Dendritic cell treated with granulocyte-macrophage colony-stimulating factor and Interleukin-4, amounts not matched to agents 40 ng/mL and 50 ng/mL, for 4 days (primary cell): ENCODE measurements at regions of chr4 and their contacts with region 1.

Region 1: GRCh38 chr4:38160487-38161207 is 200.4 kb downstream of the PTTG2 start:
- H3K4me3 Mint-ChIP-seq: no peak overlapping the region
- H3K27ac Mint-ChIP-seq: peak overlapping the region; percentile 90
- H3K4me1 Mint-ChIP-seq: peaks cover 76% of the 10 kb centered on the region
- H3K27me3 Mint-ChIP-seq: no peaks in the 10 kb centered on the region

Region 2: DNA sequence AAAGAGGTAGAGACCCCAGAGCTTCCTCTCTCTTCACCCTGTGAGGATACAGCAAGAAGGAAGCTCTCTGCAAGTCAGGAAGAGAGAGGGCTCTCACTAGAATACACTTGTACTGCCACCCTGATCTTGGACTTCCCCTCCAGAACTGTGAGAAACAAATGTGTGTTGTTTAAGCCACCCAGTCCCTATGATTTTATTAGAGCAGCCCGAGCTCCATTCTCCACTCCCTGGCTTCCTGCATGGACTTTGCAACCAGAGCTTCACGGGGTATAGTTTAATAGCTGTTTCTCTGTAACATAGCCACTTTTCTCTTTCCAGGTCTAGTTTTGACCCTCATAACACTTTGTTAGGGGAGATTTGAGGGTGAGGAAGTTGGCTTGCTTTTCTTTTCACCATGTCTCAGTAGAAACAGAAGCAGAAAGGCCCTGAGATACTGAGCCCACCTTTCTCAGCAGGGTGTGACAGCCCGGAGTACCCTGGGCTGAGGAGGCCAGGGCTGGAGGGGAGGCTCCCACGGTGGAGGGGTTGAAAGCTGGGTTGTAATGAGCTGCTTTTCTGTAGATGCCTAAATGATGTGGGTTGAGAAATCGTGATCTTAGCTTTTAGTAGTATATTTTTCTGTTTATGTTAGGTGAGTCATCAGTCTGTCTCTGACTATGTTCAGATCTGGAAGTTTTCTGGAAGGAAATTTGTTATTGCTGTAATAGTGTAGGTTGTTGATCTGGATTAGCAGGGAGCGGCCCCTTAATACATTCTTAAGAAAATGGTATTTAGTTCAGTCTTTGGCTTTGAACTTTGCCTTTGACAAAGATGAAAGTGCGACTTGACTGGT is 81.8 kb before region 1 on chr4:
- intact Hi-C with region 1: loop called (anchors 5 kb)
- H3K4me3 Mint-ChIP-seq: peak overlapping the region; percentile 61
- H3K27ac Mint-ChIP-seq: peak overlapping the region; percentile 91
- H3K4me1 Mint-ChIP-seq: peaks cover 91% of the 10 kb centered on the region
- H3K27me3 Mint-ChIP-seq: no peaks in the 10 kb centered on the region

Region 3: GRCh38 chr4:38174801-38175200 is 14.2 kb after region 1 on chr4:
- intact Hi-C with region 1: loop called (anchors 2 kb)
- H3K4me3 Mint-ChIP-seq: peak overlapping the region; percentile 9
- H3K27ac Mint-ChIP-seq: peak overlapping the region; percentile 83
- H3K4me1 Mint-ChIP-seq: peaks cover 66% of the 10 kb centered on the region
- H3K27me3 Mint-ChIP-seq: peaks cover 5% of the 10 kb centered on the region